ENCODE measurements at regions of chr10 and their contacts with region 1.

Region 1: GRCh38 chr10:14569274-14570060 is 205.2 kb downstream of the FAM107B start:
- DNase-seq: no peak
- ATAC-seq: no peak
- H3K4me3 ChIP-seq: no peak overlapping the region
- H3K27ac ChIP-seq: peak overlapping the region; percentile 77 to 84; a peak in 5 of 6 replicates
- H3K4me1 ChIP-seq: peaks cover 74% of the 10 kb centered on the region
- CTCF ChIP-seq: no peak
- EP300 ChIP-seq: no peak
- POLR2A ChIP-seq: no peak
- RAD21 ChIP-seq: no peak

Region 2: DNA sequence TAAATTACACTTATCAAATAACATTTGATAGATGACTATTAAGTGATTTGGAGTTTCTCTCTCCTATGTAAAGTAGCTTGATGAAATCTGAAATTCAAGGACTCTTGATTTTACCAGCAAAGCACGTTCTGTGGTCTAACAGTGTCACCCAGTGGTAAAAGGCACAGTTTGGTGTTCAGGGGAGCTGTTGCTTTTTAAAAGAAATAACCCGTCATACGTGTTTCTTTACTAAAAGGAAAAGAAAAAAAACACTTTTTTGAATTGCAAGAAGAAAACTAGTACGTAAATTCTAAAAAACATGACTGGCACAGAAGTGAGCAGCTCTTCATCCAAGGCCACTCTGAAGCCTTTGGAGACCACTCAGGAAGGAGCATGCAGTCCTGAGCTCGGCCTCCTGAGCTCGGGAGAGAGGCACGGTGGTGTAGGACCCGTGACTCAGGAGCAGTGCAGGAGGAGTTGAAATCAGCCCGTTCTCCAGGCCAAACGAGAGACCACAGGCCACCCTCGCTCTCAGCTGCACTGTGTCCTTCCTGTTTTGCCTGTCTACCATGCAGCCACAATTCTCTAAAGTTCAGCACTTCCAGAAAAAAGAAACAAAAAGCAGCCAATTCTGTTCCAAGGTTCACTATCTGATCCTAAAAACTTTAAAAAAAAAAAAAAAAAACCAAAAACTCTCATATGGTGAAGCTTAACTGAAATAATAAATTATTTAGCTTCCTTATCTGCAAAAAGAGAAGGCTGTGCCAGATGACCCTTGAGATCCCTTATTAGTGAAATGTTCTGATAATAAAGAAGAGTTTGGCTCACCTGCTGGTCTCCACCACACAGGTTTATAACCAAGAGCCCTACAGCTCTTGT is 26.2 kb before region 1 on chr10:
- CTCF ChIA-PET with region 1: interaction called, 11 read pairs
- POLR2A ChIA-PET with region 1: no interaction called
- DNase-seq: no peak
- ATAC-seq: no peak
- H3K4me3 ChIP-seq: no peak overlapping the region
- H3K27ac ChIP-seq: peak overlapping the region in 1 of 2 experiments; percentile 50; a peak in 4 of 6 replicates
- H3K4me1 ChIP-seq: peaks cover 41% of the 10 kb centered on the region
- CTCF ChIP-seq: no peak
- EP300 ChIP-seq: no peak
- POLR2A ChIP-seq: no peak
- RAD21 ChIP-seq: peak; percentile 21 to 39; a peak in 2 of 5 replicates

Region 3: GRCh38 chr10:14601872-14602725 is 32.6 kb after region 1 on chr10:
- CTCF ChIA-PET with region 1: no interaction called
- POLR2A ChIA-PET with region 1: no interaction called
- DNase-seq: peak; percentile 61 to 74
- ATAC-seq: peak; percentile 32 to 70; a peak in 4 of 6 replicates
- H3K4me3 ChIP-seq: peak overlapping the region; percentile 98
- H3K27ac ChIP-seq: peak overlapping the region; percentile 88 to 99
- H3K4me1 ChIP-seq: peaks cover 49% of the 10 kb centered on the region
- CTCF ChIP-seq: no peak
- EP300 ChIP-seq: no peak
- POLR2A ChIP-seq: no peak
- RAD21 ChIP-seq: peak in 1 of 2 experiments; percentile 40; a peak in 2 of 5 replicates